Left cardiac atrium (tissue), 4 donors: ENCODE measurements at regions of chr3 and their contacts with region 1.

Region 1: GRCh38 chr3:160707187-160707794 is 30.3 kb downstream of the ARL14 start:
- DNase-seq: no peak
- ATAC-seq: peak in 1 of 2 donors; percentile 70

Region 2: GRCh38 chr3:160544844-160545503 is 162.3 kb before region 1 on chr3:
- intact Hi-C with region 1: no loop called
- DNase-seq: no peak
- ATAC-seq: no peak

Region 3: GRCh38 chr3:160577556-160578195 is 129.6 kb before region 1 on chr3:
- intact Hi-C with region 1: loop called in 1 of 2 experiments (anchors 10 kb)
- DNase-seq: no peak
- ATAC-seq: peak; percentile 31 to 79

Region 4: DNA sequence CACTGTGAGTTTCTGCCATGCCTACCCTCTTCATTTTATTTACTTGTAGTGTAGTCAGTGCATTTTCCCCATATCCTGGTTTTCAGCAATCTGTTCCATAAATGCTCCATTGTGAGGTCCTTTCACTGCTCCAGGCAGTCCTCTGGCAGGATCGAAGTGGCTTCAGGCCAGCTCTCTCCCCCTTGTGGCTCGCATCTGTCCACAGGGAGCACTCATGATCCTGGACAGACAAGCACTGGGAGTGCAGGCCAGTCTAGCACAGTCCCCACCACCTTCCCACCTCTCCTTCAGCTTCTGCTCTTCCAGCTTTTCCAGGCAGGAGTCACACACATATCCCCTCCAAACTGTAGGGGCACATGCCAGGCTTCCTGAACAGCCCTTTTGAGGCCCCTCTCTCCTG is 222.3 kb after region 1 on chr3:
- intact Hi-C with region 1: loop called (anchors 5 kb)
- DNase-seq: peak; percentile 50
- ATAC-seq: peak; percentile 85 to 88

Region 5: DNA sequence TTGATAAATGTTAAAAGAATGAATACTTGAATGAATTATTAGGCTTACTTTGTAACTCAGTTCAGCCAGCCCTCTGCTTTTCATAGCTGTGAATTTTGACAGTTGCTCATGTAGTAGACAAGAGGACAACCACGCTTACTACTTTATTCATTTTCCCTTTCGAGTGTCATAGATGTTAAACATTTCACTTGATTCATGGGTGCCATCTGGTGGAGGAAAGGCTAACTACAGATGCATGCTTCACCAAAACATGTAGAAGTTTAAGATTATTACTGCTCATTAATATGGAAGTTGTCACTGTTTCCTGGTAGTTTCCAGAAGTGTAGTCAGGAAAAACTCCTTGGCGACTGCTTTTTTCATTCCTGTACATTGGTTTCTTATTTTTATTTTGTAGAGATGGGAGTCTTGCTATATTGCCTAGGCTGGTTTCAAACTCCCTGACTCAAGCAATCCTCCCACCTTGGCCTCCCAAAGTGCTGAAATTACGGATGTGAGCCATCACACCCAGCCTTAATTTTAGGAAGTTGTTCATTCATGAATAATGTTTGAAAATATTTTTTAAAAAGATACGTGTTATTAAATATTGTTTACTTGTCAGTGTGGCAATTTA is 234.7 kb after region 1 on chr3:
- intact Hi-C with region 1: loop called in 1 of 2 experiments (anchors 1 kb)
- DNase-seq: peak; percentile 43
- ATAC-seq: peak; percentile 56 to 67

Region 6: DNA sequence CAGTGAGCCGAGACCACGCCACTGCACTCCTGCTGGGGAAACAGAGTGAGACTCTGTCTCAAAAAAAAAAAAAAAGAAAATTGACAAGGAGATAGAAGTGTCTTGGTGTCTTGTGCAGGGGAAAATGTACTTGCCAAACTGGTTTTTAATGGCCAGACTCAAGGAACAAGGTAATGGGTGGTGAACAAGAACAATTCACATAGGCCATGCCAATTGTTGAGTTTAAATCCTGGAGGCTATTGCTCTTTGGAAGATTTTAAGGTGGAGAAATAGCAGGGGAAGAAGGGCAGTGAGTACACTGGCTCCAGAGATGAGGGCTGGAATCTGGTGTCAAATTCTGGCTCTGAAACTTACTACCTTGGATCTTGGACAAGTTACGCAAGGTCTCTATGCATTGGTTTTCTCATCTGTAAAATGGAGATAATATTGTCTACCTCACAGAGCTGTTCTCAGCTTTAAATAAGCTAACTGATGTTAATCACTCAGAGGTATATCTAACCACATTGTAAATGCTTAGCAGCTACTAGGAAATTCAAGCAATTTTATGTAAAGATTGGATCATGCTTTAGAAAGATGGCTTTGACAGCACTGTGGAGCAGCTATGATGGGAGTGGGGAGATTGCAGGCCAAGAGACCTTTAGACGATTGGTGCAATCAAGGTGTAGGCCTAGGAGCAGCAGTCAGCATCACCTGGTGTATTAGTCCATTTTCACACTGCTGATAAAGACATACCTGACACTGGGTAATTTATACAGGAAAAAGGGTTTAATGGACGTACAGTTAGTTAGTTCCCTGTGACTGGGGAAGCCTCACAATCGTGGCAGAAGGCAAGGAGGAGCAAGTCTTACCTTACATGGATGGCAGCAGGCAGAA is 319.6 kb after region 1 on chr3:
- intact Hi-C with region 1: no loop called
- DNase-seq: no peak
- ATAC-seq: no peak

Region 7: DNA sequence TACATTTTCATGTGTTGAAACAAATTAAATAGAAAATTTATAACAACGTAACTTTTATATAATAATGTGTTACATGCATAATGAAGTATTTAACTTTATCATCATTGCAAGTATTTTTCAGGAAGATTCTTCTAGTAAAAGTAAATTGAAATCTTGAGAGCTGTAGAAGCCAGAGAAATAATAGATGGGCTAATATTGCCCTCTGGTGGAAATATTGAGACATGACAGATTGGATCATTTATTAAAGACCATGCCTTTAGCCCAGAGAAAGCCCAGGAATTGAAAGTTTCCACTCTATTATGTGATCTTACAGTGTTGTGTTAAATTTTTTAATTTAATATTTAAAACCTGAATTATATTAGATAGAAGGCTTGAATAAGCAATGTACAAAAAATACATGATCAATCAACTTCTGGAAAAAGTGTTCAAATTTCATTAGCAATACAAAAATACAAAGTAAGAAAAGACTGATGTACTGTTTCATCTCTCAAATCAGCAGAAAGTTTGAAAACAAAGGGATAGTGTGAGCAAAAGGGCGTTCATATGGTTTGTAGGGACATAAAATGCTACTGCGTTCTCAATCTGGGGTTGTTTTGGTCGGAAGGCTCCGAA is 716.7 kb after region 1 on chr3:
- intact Hi-C with region 1: loop called in 1 of 2 experiments (anchors 10 kb)
- DNase-seq: no peak
- ATAC-seq: peak in 1 of 2 donors; percentile 60